Dorsolateral prefrontal cortex (tissue), 120 donors: ENCODE measurements at regions of chr19 and their contacts with region 1.

Region 1: GRCh38 chr19:13880059-13881043 is 3.4 kb downstream of the NANOS3 start:
- DNase-seq: peak; percentile 95 to 98 (median 97)
- H3K4me3 ChIP-seq: peak overlapping the region in 57 of 59 donors; percentile 14 to 66 (median 43)
- H3K27ac ChIP-seq: peak overlapping the region in 51 of 59 donors; percentile 10 to 92 (median 77)
- H3K27me3 ChIP-seq: no peaks in the 10 kb centered on the region
- CTCF ChIP-seq: peak; percentile 92 to 100 (median 100)

Region 2: DNA sequence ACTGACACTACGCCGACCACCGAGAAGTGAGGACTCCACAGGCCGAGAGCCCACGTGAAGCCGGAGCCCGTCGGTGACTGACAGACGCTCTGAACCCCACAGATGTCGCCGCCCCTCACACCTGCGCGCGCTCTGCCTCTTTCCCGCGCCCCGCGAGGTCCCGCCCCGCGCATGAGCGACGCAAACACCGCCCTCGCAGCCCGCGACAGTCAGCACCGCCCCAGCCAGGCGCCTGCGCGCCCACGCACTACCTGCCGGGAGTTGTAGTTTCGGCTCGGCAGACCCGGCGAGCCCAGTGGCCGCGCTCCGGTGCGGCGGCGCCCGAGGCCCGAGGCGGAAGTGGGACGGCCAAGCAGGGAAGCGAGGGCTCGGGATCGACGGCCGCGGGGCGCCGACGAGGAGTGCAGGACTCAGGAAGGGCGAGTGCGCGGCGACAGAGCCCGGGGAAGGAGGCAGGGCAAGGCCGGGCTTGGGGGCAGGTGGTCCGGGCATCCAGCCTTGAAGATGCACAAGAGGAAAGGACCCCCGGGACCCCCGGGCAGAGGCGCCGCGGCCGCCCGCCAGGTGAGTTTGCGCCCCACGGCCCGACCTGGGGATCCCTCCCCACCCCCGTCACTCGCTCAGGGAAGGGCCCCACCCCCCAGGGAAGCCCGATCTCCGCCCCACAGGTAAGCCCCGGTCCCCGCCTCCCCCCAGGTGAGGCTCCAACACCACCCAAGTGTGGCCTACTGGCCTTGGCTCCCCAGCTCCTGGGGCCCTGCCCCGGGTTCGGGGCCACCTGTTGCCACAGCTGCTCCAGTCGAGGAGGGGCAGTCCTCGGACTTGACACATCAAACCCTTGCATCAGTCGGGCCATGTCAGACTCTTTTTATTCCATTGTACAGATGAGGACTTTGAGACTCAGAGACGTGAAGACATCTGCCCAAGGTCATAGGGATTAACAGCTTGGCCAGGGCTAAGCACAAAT is 25.9 kb after region 1 on chr19 and contains the starts of genes BRME1 and CC2D1A:
- intact Hi-C with region 1: loop called in 1 of 2 experiments (anchors 2 kb)
- DNase-seq: peak; percentile 90 to 98 (median 94)
- H3K4me3 ChIP-seq: peak within 1 kb of the TSS; percentile 60 to 100 (median 92)
- H3K27ac ChIP-seq: peak within 1 kb of the TSS in 45 of 59 donors; percentile 29 to 92 (median 71)
- H3K27me3 ChIP-seq: no peaks in the 10 kb centered on the region
- CTCF ChIP-seq: peak in 43 of 56 donors; percentile 6 to 56 (median 35)
- total RNA-seq, gene BRME1: 2.8 to 13.5 (median 8.1) TPM
- total RNA-seq, gene CC2D1A: 50.4 to 138 (median 75.1) TPM

Region 3: DNA sequence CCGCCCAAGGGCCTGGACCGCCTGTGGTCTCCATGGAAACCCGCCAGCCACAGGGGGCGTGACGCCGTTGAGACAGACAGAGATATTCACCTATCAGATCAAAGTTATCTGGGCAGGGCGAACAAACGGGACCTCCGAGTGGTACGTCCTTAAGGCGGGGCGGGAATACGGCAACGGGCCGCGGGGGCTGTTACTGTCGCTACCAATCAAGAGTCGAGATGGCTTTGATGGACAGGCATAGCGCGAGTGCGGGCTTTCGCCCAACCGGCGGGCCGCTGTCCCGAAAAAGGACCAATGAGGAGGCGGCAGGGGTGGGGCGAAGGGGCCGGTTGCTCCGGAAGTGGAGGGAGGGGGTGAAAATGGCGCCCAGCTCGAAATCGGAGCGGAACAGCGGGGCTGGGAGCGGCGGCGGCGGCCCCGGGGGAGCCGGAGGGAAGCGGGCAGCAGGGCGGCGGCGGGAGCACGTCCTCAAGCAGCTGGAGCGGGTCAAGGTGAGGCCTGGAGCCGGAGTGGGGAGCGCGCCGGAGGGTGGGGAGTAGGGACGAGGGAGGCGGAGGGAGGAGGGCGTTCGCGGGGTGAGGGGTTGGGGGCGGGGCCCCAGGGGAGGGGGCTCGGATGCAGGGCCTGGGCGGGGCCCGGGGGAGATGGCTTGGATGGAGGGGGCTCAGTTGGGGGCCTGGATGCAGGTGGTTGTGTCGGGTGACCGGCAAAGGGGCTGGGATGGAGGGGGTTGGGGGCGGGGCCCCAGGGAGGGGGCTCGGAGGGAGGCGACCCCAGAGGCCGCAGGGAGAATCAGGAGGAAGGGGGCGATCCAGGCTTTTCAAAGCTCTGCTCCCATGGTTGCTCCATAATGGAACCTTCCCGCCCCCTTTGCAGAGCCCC is 72.0 kb after region 1 on chr19 and contains the start of gene DCAF15:
- intact Hi-C with region 1: loop called in 1 of 2 experiments (anchors 5 kb)
- DNase-seq: peak; percentile 98 to 100 (median 100)
- H3K4me3 ChIP-seq: peak within 1 kb of the TSS; percentile 49 to 86 (median 78)
- H3K27ac ChIP-seq: peak within 1 kb of the TSS in 51 of 59 donors; percentile 4 to 94 (median 75)
- H3K27me3 ChIP-seq: no peaks in the 10 kb centered on the region
- CTCF ChIP-seq: peak in 16 of 56 donors; percentile 8 to 41 (median 30)
- total RNA-seq, gene DCAF15: 12.2 to 26.7 (median 17.6) TPM

Region 4: DNA sequence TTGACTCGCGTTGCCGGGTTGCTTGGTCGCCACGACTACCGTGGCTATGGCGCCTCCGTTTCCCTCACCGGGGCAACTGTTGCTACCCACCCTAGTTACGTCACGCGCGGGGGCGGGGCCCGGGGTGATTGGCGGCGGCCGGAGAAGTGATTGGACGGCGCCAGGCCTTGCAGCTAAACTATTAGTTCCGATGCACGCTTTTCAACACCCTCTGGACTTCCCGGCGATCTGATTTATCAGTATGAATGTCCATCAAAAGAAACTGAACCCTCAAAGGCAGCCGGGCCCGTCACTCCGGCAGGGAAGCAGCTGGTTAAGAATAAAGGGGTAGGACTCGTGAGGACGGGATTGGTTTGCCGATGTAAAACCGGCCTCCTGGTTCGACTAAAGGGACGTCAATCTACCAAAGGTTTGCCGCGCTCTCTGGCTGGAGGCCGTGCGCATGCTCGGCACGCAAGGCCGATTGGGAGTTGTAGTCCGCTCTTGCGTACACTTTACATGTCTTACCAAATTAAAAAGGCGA is 126.0 kb after region 1 on chr19 and contains the start of gene RFX1:
- intact Hi-C with region 1: loop called in 1 of 2 experiments (anchors 5 kb)
- DNase-seq: peak; percentile 98 to 100 (median 100)
- H3K4me3 ChIP-seq: peak within 1 kb of the TSS; percentile 62 to 97 (median 89)
- H3K27ac ChIP-seq: peak within 1 kb of the TSS; percentile 94 to 100 (median 99)
- H3K27me3 ChIP-seq: no peaks in the 10 kb centered on the region
- CTCF ChIP-seq: peak in 2 of 56 donors; percentile 6 to 10
- total RNA-seq, gene RFX1: 7.9 to 26.0 (median 14.0) TPM